OCI-LY7 (cell line): ENCODE measurements at regions of chr19 and their contacts with region 1.

Region 1: GRCh38 chr19:3762501-3763459 is at the start of gene MRPL54:
- DNase-seq: peak; percentile 99
- H3K4me3 ChIP-seq: peak within 1 kb of the TSS; percentile 77
- H3K27ac ChIP-seq: peak within 1 kb of the TSS; percentile 83
- H3K4me1 ChIP-seq: peaks cover 9% of the 10 kb centered on the region
- CTCF ChIP-seq: no peak
- total RNA-seq, gene MRPL54: 88.7 and 93.1 TPM in 2 replicates

Region 2: GRCh38 chr19:3626473-3627350 is 136.1 kb before region 1 on chr19 and contains the start of gene CACTIN:
- CTCF ChIA-PET with region 1: no interaction called
- POLR2A ChIA-PET with region 1: interaction called, 3 read pairs
- intact Hi-C with region 1: loop called (anchors 5 kb)
- DNase-seq: peak; percentile 99
- H3K4me3 ChIP-seq: peak within 1 kb of the TSS; percentile 100
- H3K27ac ChIP-seq: peak within 1 kb of the TSS; percentile 56
- H3K4me1 ChIP-seq: peaks cover 18% of the 10 kb centered on the region
- CTCF ChIP-seq: no peak
- total RNA-seq, gene CACTIN: 35.9 and 38.6 TPM in 2 replicates

Region 3: GRCh38 chr19:3733549-3734309 is 29.1 kb before region 1 on chr19:
- CTCF ChIA-PET with region 1: no interaction called
- POLR2A ChIA-PET with region 1: no interaction called
- intact Hi-C with region 1: no loop called
- DNase-seq: no peak
- H3K4me3 ChIP-seq: no peak overlapping the region
- H3K27ac ChIP-seq: no peak overlapping the region
- H3K4me1 ChIP-seq: no peaks in the 10 kb centered on the region
- CTCF ChIP-seq: no peak

Region 4: GRCh38 chr19:3809881-3810707 is 47.3 kb after region 1 on chr19:
- CTCF ChIA-PET with region 1: no interaction called
- POLR2A ChIA-PET with region 1: interaction called, 5 read pairs
- intact Hi-C with region 1: loop called (anchors 5 kb)
- DNase-seq: peak; percentile 29
- H3K4me3 ChIP-seq: no peak overlapping the region
- H3K27ac ChIP-seq: no peak overlapping the region
- H3K4me1 ChIP-seq: peaks cover 24% of the 10 kb centered on the region
- CTCF ChIP-seq: no peak

Region 5: GRCh38 chr19:3830621-3831589 is 68.1 kb after region 1 on chr19:
- CTCF ChIA-PET with region 1: no interaction called
- POLR2A ChIA-PET with region 1: no interaction called
- intact Hi-C with region 1: no loop called
- DNase-seq: no peak
- H3K4me3 ChIP-seq: no peak overlapping the region
- H3K27ac ChIP-seq: no peak overlapping the region
- H3K4me1 ChIP-seq: no peaks in the 10 kb centered on the region
- CTCF ChIP-seq: no peak

Region 6: GRCh38 chr19:3857449-3858003 is 94.7 kb after region 1 on chr19:
- CTCF ChIA-PET with region 1: no interaction called
- POLR2A ChIA-PET with region 1: no interaction called
- intact Hi-C with region 1: no loop called
- DNase-seq: peak; percentile 39
- H3K4me3 ChIP-seq: no peak overlapping the region
- H3K27ac ChIP-seq: no peak overlapping the region
- H3K4me1 ChIP-seq: no peaks in the 10 kb centered on the region
- CTCF ChIP-seq: no peak